ENCODE measurements at regions of chr12 and their contacts with region 1.

Region 1: DNA sequence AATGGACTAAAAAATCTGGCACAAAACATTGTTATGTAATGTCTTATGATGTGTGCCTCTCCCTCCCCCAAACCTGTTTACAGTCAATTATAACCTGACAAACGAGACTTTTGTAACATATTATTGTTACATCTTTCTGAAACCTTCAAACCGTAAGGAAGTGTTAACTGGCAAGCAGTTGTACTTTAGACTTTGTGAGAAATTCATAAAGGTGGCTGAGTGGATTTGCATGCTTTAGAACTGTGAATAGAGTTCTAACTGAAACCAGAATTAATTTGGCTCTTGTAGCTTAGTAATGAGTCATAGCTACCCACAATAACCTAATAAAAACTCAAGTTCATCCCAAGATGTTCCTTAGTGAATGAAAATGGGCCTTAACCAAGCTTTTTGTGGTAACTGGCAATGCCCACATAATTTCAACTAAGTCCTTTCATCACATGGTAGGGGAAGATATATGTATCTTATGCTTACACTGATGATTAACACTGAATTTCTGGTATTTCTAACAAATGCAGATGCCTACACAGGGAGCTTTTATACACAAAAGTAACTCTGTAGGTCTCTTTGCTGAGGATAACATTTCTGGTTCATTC is 29.7 kb downstream of the RAD9B start:
- DNase-seq: peak; percentile 76
- CTCF ChIP-seq: no peak

Region 2: GRCh38 chr12:110330544-110330943 is 201.3 kb before region 1 on chr12:
- CTCF ChIA-PET with region 1: no interaction called
- POLR2A ChIA-PET with region 1: no interaction called
- DNase-seq: no peak
- CTCF ChIP-seq: no peak

Region 3: DNA sequence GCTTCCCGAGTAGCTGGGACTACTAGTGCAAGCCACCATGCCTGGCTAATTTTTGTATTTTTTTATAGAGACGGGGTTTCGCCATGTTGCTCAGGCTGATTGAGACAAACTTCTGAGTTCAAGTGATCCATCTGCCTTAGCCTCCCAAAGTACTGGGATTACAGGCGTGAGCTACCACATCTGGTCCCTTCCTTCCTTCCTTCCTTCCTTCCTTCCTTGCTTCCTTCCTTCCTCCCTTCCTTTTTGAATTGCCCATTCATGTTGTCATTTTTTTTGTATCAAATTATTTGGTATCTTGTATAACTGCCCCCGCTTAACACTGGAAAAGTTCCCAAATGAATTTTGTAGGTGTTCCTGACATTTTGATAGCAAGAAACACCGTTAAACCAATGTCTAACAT is 18.0 kb before region 1 on chr12:
- CTCF ChIA-PET with region 1: interaction called, 23 read pairs
- POLR2A ChIA-PET with region 1: no interaction called
- DNase-seq: no peak
- CTCF ChIP-seq: no peak

Region 4: DNA sequence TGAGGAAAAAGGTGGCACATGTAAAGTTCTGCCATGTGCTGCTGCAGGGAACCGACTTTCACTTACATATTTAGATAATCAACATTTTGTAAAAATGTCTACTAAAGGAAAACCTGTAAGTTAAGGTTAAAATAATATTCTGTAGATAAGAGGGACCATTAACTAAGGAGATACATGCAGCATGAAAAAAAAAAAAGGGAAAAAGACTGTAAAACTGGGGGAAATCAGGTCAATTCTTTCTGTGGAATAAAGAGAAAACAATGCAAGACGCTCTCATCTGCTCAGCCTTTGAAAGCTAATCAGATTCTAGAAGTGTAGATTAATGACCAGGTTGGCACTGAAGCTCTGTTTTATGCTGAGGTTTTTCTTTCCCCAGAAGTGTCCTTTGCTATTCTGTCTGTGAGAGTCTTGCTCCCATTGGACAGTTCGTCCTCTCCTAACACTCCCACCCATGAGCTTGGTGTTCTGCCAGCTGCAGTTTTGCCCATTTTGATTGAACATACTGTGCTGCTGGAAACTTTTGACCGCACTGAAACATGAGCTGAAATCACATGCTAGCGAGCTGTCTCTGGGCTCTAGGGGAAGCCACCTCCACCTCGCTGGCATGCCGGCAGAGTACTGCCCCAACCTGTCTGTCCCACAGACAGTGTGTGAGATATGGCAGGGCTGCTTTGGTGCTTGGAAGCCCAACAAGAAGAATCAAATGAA is 11.6 kb after region 1 on chr12:
- CTCF ChIA-PET with region 1: interaction called, 23 read pairs
- POLR2A ChIA-PET with region 1: interaction called, 6 read pairs
- DNase-seq: no peak
- CTCF ChIP-seq: no peak

Region 5: GRCh38 chr12:110548678-110549077 is 16.8 kb after region 1 on chr12:
- CTCF ChIA-PET with region 1: interaction called, 18 read pairs
- POLR2A ChIA-PET with region 1: no interaction called
- DNase-seq: no peak
- CTCF ChIP-seq: no peak

Region 6: GRCh38 chr12:110556705-110557104 is 24.9 kb after region 1 on chr12:
- CTCF ChIA-PET with region 1: interaction called, 11 read pairs
- POLR2A ChIA-PET with region 1: no interaction called
- DNase-seq: no peak
- CTCF ChIP-seq: no peak

Region 7: DNA sequence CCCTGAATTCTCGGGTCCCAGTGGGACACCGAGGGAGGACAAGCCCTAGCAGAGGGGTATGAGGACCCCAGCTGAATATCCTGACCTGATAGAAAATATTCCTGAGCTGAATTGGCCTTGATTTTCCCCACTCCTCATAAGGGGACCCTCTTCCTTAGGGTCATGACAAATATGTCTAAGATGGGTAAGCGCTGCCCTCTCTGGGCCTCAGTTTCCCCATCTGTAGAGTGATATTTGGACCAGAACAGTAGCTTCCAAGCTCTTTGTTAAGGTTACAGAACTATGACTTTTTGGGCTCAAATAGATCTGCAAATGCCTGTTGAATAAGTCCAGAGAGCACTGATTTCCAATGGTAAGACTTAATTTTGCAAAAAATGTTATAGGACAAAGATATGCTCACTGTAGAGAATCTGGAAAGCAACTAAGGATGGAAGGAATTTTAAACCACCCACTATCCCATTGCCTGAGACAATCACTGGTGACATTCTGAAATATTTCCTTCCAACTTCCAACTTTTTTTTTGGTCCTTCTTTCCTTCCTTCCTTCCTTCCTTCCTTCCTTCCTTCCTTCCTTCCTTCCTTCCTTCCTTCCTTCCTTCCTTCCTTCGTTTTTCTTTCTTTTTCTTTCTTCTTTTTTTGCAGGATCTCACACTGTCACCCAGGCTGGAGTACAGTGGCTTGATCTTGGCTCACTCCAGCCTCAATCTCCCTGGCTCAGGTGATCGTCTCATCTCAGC is 356.6 kb after region 1 on chr12:
- CTCF ChIA-PET with region 1: no interaction called
- POLR2A ChIA-PET with region 1: no interaction called
- DNase-seq: no peak
- CTCF ChIP-seq: no peak

Measured in GM10248 (cell line).